CD4-positive, alpha-beta memory T cell (primary cell): ENCODE measurements at regions of chr22 and their contacts with region 1.

Region 1: GRCh38 chr22:19178656-19179496 is at the start of gene SLC25A1:
- DNase-seq: peak; percentile 50 to 70 (median 61)
- H3K4me3 ChIP-seq: peak within 1 kb of the TSS in 1 of 2 donors; percentile 66
- H3K4me3 Mint-ChIP-seq: peak within 1 kb of the TSS; percentile 82 to 92 (median 90)
- H3K27ac ChIP-seq: peak within 1 kb of the TSS; percentile 62
- H3K27ac Mint-ChIP-seq: peak within 1 kb of the TSS; percentile 83 to 93 (median 86)
- H3K4me1 ChIP-seq: peaks cover 23% of the 10 kb centered on the region
- H3K4me1 Mint-ChIP-seq: peaks cover 4 to 32% (median 15%) of the 10 kb centered on the region in 4 donors
- H3K27me3 ChIP-seq: no peaks in the 10 kb centered on the region
- H3K27me3 Mint-ChIP-seq: no peaks in the 10 kb centered on the region
- total RNA-seq, gene SLC25A1: 39.0 to 40.7 TPM

Region 2: DNA sequence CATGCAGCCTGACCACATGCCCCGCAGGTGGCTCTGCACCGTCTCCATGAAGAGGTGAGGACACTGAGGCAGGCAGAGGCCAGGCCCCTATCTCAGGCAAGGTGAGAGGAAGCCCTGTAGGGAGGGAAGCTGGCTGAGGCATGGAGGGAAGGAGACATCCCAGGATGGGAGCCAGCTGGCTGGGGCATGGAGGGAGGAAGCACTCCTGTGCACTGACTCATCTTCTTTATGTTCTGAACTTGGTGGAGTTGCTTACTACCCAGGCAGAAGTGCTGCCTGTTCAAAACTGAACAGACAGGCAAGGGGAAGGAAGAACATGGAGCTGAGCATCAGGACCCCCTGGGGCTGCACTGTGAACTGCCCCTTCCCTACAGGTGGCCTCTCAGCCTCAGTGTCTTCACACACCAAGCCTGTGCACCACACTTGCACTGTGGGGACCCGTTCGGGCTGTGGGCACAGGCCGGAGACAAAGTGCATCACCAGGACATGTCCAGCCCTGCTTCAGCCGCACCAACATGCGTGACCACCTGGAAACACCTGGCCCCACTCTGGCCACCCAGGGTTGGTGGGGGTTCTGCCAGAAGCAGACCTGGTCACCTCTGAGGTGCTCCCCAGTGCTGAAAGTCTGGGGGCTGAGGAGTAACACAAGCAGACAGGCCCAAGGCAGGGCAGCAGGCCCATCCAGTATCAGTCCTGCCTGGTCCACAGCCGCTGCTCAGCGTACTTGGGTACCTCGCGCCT is 112.2 kb before region 1 on chr22:
- CTCF ChIA-PET with region 1: no interaction called
- POLR2A ChIA-PET with region 1: no interaction called
- intact Hi-C with region 1: no loop called
- DNase-seq: no peak
- H3K4me3 ChIP-seq: no peak overlapping the region
- H3K4me3 Mint-ChIP-seq: no peak overlapping the region
- H3K27ac ChIP-seq: no peak overlapping the region
- H3K27ac Mint-ChIP-seq: no peak overlapping the region
- H3K4me1 ChIP-seq: no peaks in the 10 kb centered on the region
- H3K4me1 Mint-ChIP-seq: peaks cover 0 to 16% (median 5%) of the 10 kb centered on the region in 4 donors
- H3K27me3 ChIP-seq: no peaks in the 10 kb centered on the region
- H3K27me3 Mint-ChIP-seq: no peaks in the 10 kb centered on the region

Region 3: GRCh38 chr22:19143967-19144400 is 34.9 kb before region 1 on chr22:
- CTCF ChIA-PET with region 1: interaction called, 6 read pairs
- POLR2A ChIA-PET with region 1: interaction called, 12 read pairs
- intact Hi-C with region 1: loop called (anchors 1 kb)
- DNase-seq: peak; percentile 22 to 59 (median 44)
- H3K4me3 ChIP-seq: peak overlapping the region; percentile 86 to 94
- H3K4me3 Mint-ChIP-seq: peak overlapping the region; percentile 96 to 100 (median 98)
- H3K27ac ChIP-seq: peak overlapping the region; percentile 81
- H3K27ac Mint-ChIP-seq: peak overlapping the region; percentile 90 to 99 (median 98)
- H3K4me1 ChIP-seq: peaks cover 12% of the 10 kb centered on the region
- H3K4me1 Mint-ChIP-seq: peaks cover 11 to 25% (median 18%) of the 10 kb centered on the region in 4 donors
- H3K27me3 ChIP-seq: peaks cover 7% of the 10 kb centered on the region
- H3K27me3 Mint-ChIP-seq: peaks cover 2 to 6% of the 10 kb centered on the region in 2 donors

Region 4: GRCh38 chr22:19447388-19448075 is 268.7 kb after region 1 on chr22 and contains the start of gene C22orf39:
- CTCF ChIA-PET with region 1: no interaction called
- POLR2A ChIA-PET with region 1: no interaction called
- intact Hi-C with region 1: loop called (anchors 1 kb)
- DNase-seq: peak; percentile 91 to 96 (median 91)
- H3K4me3 ChIP-seq: peak within 1 kb of the TSS; percentile 63 to 65
- H3K4me3 Mint-ChIP-seq: peak within 1 kb of the TSS; percentile 91 to 98 (median 95)
- H3K27ac ChIP-seq: peak within 1 kb of the TSS; percentile 91
- H3K27ac Mint-ChIP-seq: peak within 1 kb of the TSS; percentile 82 to 99 (median 99)
- H3K4me1 ChIP-seq: peaks cover 37% of the 10 kb centered on the region
- H3K4me1 Mint-ChIP-seq: peaks cover 29 to 59% (median 44%) of the 10 kb centered on the region in 4 donors
- H3K27me3 ChIP-seq: no peaks in the 10 kb centered on the region
- H3K27me3 Mint-ChIP-seq: no peaks in the 10 kb centered on the region
- total RNA-seq, gene C22orf39: 40.5 TPM

Region 5: GRCh38 chr22:19717691-19718455 is 539.0 kb after region 1 on chr22:
- CTCF ChIA-PET with region 1: no interaction called
- POLR2A ChIA-PET with region 1: no interaction called
- intact Hi-C with region 1: loop called (anchors 2 kb)
- DNase-seq: peak; percentile 73 to 85 (median 82)
- H3K4me3 ChIP-seq: peak overlapping the region in 1 of 2 donors; percentile 38
- H3K4me3 Mint-ChIP-seq: peak overlapping the region; percentile 44 to 86 (median 78)
- H3K27ac ChIP-seq: no peak overlapping the region
- H3K27ac Mint-ChIP-seq: peak overlapping the region in 1 of 7 donors; percentile 64
- H3K4me1 ChIP-seq: peaks cover 25% of the 10 kb centered on the region
- H3K4me1 Mint-ChIP-seq: peaks cover 2 to 34% (median 8%) of the 10 kb centered on the region in 4 donors
- H3K27me3 ChIP-seq: peaks cover 25% of the 10 kb centered on the region
- H3K27me3 Mint-ChIP-seq: peaks cover 19 to 39% of the 10 kb centered on the region in 2 donors